Activated CD4-positive, alpha-beta memory T cell treated with anti-CD3 and anti-CD28 coated beads for 36 hours (primary cell): ENCODE measurements at regions of chr1 and their contacts with region 1.

Region 1: GRCh38 chr1:110780600-110781484 is 92.1 kb upstream of the CD53 start:
- DNase-seq: peak; percentile 83
- H3K4me3 Mint-ChIP-seq: no peak overlapping the region
- H3K27ac Mint-ChIP-seq: no peak overlapping the region
- H3K4me1 Mint-ChIP-seq: peaks cover 29% of the 10 kb centered on the region
- H3K27me3 Mint-ChIP-seq: no peaks in the 10 kb centered on the region

Region 2: GRCh38 chr1:110554871-110555801 is 225.7 kb before region 1 on chr1:
- CTCF ChIA-PET with region 1: interaction called, 31 read pairs
- POLR2A ChIA-PET with region 1: no interaction called
- intact Hi-C with region 1: loop called (anchors 10 kb)
- DNase-seq: peak; percentile 71
- H3K4me3 Mint-ChIP-seq: no peak overlapping the region
- H3K27ac Mint-ChIP-seq: no peak overlapping the region
- H3K4me1 Mint-ChIP-seq: peaks cover 4% of the 10 kb centered on the region
- H3K27me3 Mint-ChIP-seq: peaks cover 42% of the 10 kb centered on the region

Region 3: DNA sequence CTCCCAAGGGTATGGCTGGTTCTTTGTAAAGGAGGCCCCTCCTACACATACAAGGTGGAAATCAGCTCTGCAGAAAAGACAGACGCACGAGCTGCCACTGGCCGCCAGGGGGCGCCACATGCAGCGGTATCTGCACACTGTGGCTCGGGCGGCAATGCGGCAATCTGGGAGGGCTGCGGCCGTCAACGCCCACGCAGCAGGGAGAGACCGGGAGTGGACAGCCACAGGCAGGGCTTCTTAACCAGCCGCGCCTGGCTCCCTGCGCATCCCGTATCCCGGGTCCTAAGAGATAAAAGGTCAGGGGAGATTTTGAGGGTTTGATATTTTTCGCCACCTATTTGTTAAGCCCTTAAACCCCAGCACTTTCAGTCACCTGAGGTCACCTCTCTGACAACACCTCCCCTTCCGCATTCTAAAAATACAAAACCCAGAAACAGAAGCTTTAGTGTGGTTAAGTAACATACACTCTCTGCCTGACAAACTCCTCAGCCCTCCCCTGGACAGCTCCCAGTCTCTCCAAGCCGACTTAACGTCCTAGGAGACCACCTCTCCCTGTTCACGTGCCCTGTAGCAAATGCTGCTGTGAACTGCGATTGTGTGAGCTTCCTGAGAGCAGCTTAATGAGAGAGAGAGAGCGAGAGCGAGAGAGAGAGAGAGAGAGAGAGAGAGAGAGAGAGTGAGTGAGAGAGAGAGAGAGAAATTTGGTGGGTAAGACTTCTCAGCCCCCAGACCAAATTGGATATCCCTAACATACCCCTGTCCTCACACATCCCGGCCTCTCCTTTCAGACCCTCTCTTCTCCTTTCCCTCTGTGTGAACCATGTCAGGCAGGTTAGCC is 161.2 kb before region 1 on chr1:
- CTCF ChIA-PET with region 1: interaction called, 240 read pairs
- POLR2A ChIA-PET with region 1: interaction called, 4 read pairs
- intact Hi-C with region 1: loop called (anchors 1 kb)
- DNase-seq: peak; percentile 93
- H3K4me3 Mint-ChIP-seq: peak overlapping the region; percentile 75
- H3K27ac Mint-ChIP-seq: peak overlapping the region; percentile 79
- H3K4me1 Mint-ChIP-seq: peaks cover 25% of the 10 kb centered on the region
- H3K27me3 Mint-ChIP-seq: no peaks in the 10 kb centered on the region

Region 4: DNA sequence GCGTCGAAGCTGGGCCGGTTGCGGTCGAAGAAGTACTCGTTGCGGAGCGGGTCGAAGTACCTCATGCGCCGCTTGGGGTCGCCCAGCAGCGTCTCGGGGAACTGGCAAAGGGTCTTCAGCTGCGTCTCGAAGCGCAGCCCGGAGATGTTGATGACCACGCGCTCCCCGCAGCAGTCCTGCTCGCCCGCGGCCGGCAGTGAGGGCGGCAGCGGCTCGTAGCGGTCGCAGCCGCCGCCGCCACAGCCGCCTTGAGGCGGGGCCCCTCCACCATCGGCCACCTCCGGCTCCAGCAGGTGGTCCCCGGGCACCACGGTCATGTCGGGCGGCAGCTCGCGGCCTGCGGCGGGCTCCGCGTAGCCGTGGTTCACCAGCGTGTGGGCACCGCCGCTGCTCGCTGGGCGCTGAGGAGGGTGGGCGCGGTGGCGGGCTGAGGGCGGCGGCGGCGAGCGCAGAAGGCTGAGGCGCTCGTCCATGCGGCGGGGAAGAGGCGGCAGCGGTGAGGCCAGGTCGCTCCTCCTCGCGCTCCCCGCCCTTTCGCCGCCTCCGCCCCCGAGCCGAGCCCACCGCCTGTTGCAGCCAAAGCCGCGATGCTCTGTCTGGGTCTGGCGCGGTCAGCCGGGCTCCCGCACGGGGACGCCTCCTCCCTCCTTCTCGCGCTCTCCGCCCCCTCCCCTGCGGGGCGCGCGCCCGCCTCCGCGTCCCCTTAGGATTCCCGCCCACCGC is 106.3 kb before region 1 on chr1 and contains the start of gene KCNA3:
- CTCF ChIA-PET with region 1: interaction called, 13 read pairs
- POLR2A ChIA-PET with region 1: no interaction called
- intact Hi-C with region 1: loop called (anchors 2 kb)
- DNase-seq: peak; percentile 72
- H3K4me3 Mint-ChIP-seq: peak within 1 kb of the TSS; percentile 95
- H3K27ac Mint-ChIP-seq: peak within 1 kb of the TSS; percentile 97
- H3K4me1 Mint-ChIP-seq: peaks cover 29% of the 10 kb centered on the region
- H3K27me3 Mint-ChIP-seq: no peaks in the 10 kb centered on the region
- total RNA-seq, gene KCNA3: 25.2 to 25.6 TPM

Region 5: DNA sequence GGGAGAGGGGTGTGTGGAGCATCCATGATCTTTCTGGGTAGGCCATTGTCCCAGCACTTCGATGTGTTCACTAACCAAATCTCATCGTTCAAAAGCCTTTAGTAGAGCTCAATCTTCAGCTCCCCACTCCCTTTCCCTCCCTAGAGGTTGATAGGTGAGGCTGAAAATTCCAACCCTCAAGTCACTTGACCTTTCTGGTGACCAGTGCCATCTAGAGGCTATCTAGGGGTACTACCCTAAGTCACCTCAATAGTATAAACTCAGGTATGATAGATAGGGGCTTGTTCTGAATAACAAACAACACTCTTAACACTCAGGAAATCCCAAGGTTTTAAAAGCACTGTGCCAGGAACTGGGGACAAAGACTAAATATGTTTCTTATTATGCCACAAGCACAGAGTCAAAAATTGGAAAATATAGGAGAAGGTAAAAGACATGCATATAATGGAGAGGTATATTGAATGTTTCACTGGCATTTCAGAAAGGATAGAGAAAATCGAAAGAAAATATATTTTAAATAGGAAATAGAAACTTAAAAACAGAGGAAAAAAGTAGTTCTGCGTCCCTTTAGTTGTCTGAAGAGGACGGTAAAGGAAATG is 49.2 kb after region 1 on chr1:
- CTCF ChIA-PET with region 1: interaction called, 50 read pairs
- POLR2A ChIA-PET with region 1: no interaction called
- intact Hi-C with region 1: loop called (anchors 1 kb)
- DNase-seq: peak; percentile 13
- H3K4me3 Mint-ChIP-seq: no peak overlapping the region
- H3K27ac Mint-ChIP-seq: no peak overlapping the region
- H3K4me1 Mint-ChIP-seq: peaks cover 2% of the 10 kb centered on the region
- H3K27me3 Mint-ChIP-seq: peaks cover 1% of the 10 kb centered on the region

Region 6: DNA sequence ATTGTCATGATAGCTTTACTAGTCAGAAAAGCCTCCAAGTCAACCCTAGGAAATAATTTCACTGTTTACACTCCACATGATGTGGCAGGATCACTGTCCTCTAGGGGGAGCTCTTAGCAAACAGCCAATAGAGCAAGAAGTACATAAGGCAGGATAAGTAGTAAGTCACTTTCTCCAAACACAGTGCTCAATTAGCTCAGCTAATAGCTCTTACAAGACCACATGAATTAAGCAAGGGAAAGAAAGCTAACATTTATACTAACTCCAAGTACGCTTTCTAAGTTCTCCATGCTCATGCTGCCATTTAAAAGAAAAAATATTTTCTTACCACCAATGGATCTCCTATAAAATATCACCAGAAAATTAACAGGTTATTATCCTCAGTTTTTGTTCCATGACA is 249.7 kb after region 1 on chr1:
- CTCF ChIA-PET with region 1: interaction called, 20 read pairs
- POLR2A ChIA-PET with region 1: no interaction called
- intact Hi-C with region 1: loop called (anchors 2 kb)
- DNase-seq: peak; percentile 53
- H3K4me3 Mint-ChIP-seq: no peak overlapping the region
- H3K27ac Mint-ChIP-seq: no peak overlapping the region
- H3K4me1 Mint-ChIP-seq: no peaks in the 10 kb centered on the region
- H3K27me3 Mint-ChIP-seq: peaks cover 10% of the 10 kb centered on the region